ENCODE measurements at regions of chr11 and their contacts with region 1.

Region 1: GRCh38 chr11:76380967-76381719 is at the starts of genes GVQW3 and THAP12:
- DNase-seq: peak; percentile 88 to 99
- H3K4me3 ChIP-seq: peak within 1 kb of the TSS; percentile 89 to 98
- H3K27ac ChIP-seq: peak within 1 kb of the TSS; percentile 73 to 84
- H3K4me1 ChIP-seq: peaks cover 0 to 21% of the 10 kb centered on the region in 2 donors
- H3K27me3 ChIP-seq: no peaks in the 10 kb centered on the region
- CTCF ChIP-seq: peak in 2 of 3 experiments; percentile 19 to 26
- total RNA-seq, gene GVQW3: not detected
- total RNA-seq, gene THAP12: 12.7 TPM

Region 2: DNA sequence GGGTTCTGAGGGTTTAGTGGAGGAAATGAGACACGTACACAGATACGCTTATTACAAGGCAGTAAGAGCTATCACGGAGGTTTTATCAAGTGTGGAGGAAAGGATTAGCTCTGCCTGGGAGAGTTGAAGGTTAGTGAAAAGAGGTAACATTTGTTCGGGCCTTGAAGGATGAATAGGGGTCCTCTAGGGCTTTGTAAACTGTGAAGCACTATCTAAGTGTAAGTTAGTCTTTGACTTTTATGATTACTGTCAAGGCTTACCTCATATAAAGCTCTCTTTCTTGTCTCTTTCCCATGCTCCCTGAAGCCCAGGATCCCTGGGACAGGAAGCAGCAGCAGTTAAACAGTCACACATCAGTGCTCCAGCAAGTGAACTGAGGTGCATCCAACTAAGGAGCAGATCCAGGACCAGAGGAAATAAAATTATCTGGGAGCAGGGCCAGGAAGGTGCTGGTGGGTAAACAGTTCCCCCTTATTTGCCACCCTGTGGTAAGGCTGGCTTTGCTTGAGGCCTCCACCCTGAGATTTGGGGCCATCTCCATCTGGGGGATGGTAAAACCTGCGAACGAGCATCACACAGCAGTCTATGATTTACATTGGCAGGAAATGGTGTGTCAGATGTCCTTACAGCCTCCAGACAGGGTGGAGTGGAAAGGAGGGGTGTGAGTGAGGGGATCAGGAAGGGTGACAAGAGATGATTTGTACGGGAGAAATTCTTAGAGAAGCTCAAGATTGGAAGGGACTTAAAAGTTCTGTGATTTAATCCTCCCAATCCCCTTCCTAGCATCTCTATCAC is 27.2 kb after region 1 on chr11:
- intact Hi-C with region 1: no loop called
- DNase-seq: no peak
- H3K4me3 ChIP-seq: no peak overlapping the region
- H3K27ac ChIP-seq: no peak overlapping the region
- H3K4me1 ChIP-seq: no peaks in the 10 kb centered on the region
- H3K27me3 ChIP-seq: no peaks in the 10 kb centered on the region
- CTCF ChIP-seq: no peak

Region 3: GRCh38 chr11:76444384-76445123 is 63.4 kb after region 1 on chr11 and contains the start of gene EMSY:
- intact Hi-C with region 1: loop called (anchors 1 kb)
- DNase-seq: peak; percentile 89 to 99
- H3K4me3 ChIP-seq: peak within 1 kb of the TSS; percentile 87 to 90
- H3K27ac ChIP-seq: peak within 1 kb of the TSS; percentile 90 to 93
- H3K4me1 ChIP-seq: peaks cover 8 to 15% of the 10 kb centered on the region in 2 donors
- H3K27me3 ChIP-seq: no peaks in the 10 kb centered on the region
- CTCF ChIP-seq: no peak
- total RNA-seq, gene EMSY: 7.5 TPM

Region 4: GRCh38 chr11:76626921-76627401 is 245.8 kb after region 1 on chr11:
- intact Hi-C with region 1: no loop called
- DNase-seq: peak in 1 of 2 donors; percentile 76
- H3K4me3 ChIP-seq: no peak overlapping the region
- H3K27ac ChIP-seq: peak overlapping the region; percentile 17 to 55
- H3K4me1 ChIP-seq: peaks cover 8 to 28% of the 10 kb centered on the region in 2 donors
- H3K27me3 ChIP-seq: no peaks in the 10 kb centered on the region
- CTCF ChIP-seq: no peak

Measured in ascending aorta (tissue), 2 donors.